Activated CD8-positive, alpha-beta T cell treated with anti-CD3 and anti-CD28 coated beads for 36 hours (primary cell): ENCODE measurements at regions of chr4 and their contacts with region 1.

Region 1: GRCh38 chr4:169612871-169613859 is 782 bp upstream of the NEK1 start:
- DNase-seq: peak; percentile 83
- ATAC-seq: peak; percentile 26
- H3K4me3 Mint-ChIP-seq: peak overlapping the region; percentile 85
- H3K27ac Mint-ChIP-seq: peak overlapping the region; percentile 97
- H3K4me1 Mint-ChIP-seq: peaks cover 50% of the 10 kb centered on the region
- H3K27me3 Mint-ChIP-seq: no peaks in the 10 kb centered on the region
- CTCF ChIP-seq: peak; percentile 80

Region 2: DNA sequence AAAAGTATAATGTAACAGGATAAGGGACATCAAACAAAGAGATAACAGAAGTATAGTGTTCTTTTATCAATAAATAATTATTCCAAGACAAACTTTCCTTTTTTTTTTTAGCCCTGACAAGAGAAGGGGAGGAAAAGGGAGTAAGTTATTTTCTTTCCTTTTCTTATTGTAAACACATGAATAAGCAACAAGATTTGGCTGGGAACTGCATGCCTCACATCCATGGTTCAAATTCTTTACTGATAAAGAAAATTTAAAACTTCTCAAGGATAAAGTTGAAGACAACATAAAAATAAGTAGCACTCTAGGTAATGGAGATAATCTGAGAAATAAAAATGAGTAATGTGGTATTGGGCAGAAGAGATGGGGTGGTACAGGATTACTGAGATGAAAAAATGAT is 72.4 kb before region 1 on chr4:
- CTCF ChIA-PET with region 1: no interaction called
- POLR2A ChIA-PET with region 1: no interaction called
- intact Hi-C with region 1: no loop called
- DNase-seq: no peak
- ATAC-seq: no peak
- H3K4me3 Mint-ChIP-seq: no peak overlapping the region
- H3K27ac Mint-ChIP-seq: no peak overlapping the region
- H3K4me1 Mint-ChIP-seq: no peaks in the 10 kb centered on the region
- H3K27me3 Mint-ChIP-seq: no peaks in the 10 kb centered on the region
- CTCF ChIP-seq: no peak

Region 3: GRCh38 chr4:169573889-169574288 is 39.3 kb before region 1 on chr4:
- CTCF ChIA-PET with region 1: no interaction called
- POLR2A ChIA-PET with region 1: no interaction called
- intact Hi-C with region 1: no loop called
- DNase-seq: no peak
- ATAC-seq: no peak
- H3K4me3 Mint-ChIP-seq: no peak overlapping the region
- H3K27ac Mint-ChIP-seq: no peak overlapping the region
- H3K4me1 Mint-ChIP-seq: no peaks in the 10 kb centered on the region
- H3K27me3 Mint-ChIP-seq: no peaks in the 10 kb centered on the region
- CTCF ChIP-seq: no peak

Region 4: GRCh38 chr4:169659716-169660670 is 46.8 kb after region 1 on chr4:
- CTCF ChIA-PET with region 1: interaction called, 31 read pairs
- POLR2A ChIA-PET with region 1: interaction called, 3 read pairs
- intact Hi-C with region 1: loop called (anchors 2 kb)
- DNase-seq: peak; percentile 84
- ATAC-seq: peak; percentile 98
- H3K4me3 Mint-ChIP-seq: peak overlapping the region; percentile 84
- H3K27ac Mint-ChIP-seq: peak overlapping the region; percentile 99
- H3K4me1 Mint-ChIP-seq: peaks cover 23% of the 10 kb centered on the region
- H3K27me3 Mint-ChIP-seq: no peaks in the 10 kb centered on the region
- CTCF ChIP-seq: no peak